B cell (primary cell): ENCODE measurements at regions of chr11 and their contacts with region 1.

Region 1: GRCh38 chr11:60363542-60364510 is 14.5 kb upstream of the MS4A7 start:
- DNase-seq: peak; percentile 92
- ATAC-seq: peak; percentile 81
- H3K4me3 ChIP-seq: peak overlapping the region; percentile 37 to 72 (median 52)
- H3K4me3 Mint-ChIP-seq: peak overlapping the region; percentile 80
- H3K27ac ChIP-seq: peak overlapping the region; percentile 82 to 92
- H3K27ac Mint-ChIP-seq: peak overlapping the region; percentile 90
- H3K4me1 ChIP-seq: peaks cover 60 to 62% of the 10 kb centered on the region in 2 donors
- H3K4me1 Mint-ChIP-seq: peaks cover 71% of the 10 kb centered on the region
- H3K27me3 ChIP-seq: no peaks in the 10 kb centered on the region
- H3K27me3 Mint-ChIP-seq: no peaks in the 10 kb centered on the region
- CTCF ChIP-seq: peak; percentile 88

Region 2: DNA sequence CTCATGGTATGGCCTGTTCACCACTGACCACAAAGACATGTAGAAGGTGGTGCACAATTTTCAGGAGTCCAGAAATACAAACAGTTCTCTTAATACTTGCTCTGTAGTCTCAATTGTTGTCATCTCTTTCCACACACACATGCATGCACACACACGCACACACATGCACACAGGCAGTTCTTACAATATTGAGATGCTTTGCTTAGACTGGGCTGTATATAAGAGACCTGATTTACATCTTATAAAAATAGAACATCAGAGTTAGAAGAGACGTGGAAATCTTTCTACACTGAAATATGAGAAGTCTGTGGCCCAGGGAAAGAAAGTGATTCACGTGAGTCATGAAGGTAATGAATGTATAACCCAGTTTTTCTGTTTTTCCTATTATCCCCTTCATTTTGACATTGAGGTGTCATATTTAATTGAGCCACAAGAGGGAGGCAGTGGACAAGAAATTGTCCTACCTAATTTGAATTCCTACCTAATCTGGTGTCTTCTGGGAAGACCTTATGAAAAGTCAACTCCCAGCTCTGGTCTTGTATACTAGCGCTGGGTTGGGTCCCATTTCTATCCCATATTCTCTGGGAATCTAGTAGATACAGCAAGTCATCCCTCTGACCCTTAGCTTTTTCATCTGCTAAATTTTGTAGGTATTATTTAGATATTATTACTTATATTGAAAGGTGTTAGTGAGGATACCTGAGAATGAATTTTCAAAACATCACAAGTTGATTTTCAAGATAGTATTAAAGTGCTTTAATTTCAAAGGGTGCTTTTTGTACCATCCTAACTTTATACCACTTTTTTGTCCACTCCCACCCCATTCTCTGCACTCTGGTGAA is 98.2 kb before region 1 on chr11:
- CTCF ChIA-PET with region 1: interaction called, 47 read pairs
- POLR2A ChIA-PET with region 1: no interaction called
- intact Hi-C with region 1: no loop called
- DNase-seq: peak; percentile 76
- ATAC-seq: peak; percentile 43
- H3K4me3 ChIP-seq: no peak overlapping the region
- H3K4me3 Mint-ChIP-seq: no peak overlapping the region
- H3K27ac ChIP-seq: no peak overlapping the region
- H3K27ac Mint-ChIP-seq: no peak overlapping the region
- H3K4me1 ChIP-seq: no peaks in the 10 kb centered on the region
- H3K4me1 Mint-ChIP-seq: peaks cover 4% of the 10 kb centered on the region
- H3K27me3 ChIP-seq: no peaks in the 10 kb centered on the region
- H3K27me3 Mint-ChIP-seq: no peaks in the 10 kb centered on the region
- CTCF ChIP-seq: peak; percentile 98

Region 3: DNA sequence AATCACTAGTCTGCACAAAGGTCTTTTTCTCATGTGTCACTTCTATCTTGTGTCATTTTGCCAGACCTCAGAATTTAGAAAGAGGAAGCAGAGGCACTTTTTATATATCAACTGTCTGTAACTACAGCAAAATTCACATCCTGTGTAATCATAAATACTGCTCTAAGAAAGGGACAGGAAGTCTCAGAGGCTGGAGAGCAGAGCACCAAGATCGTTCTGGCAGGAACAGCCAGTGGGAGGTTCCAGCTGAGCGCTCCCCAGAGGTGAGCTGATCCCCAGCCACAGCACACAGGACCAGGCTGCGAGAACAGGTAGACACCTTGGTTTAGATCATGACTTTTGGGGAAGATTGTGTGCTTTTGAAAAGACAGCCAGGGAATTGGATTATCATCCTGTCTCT is 14.5 kb after region 1 on chr11 and contains the start of gene MS4A7:
- CTCF ChIA-PET with region 1: interaction called, 23 read pairs
- POLR2A ChIA-PET with region 1: interaction called, 5 read pairs
- intact Hi-C with region 1: loop called (anchors 1 kb)
- DNase-seq: peak; percentile 87
- ATAC-seq: peak; percentile 81
- H3K4me3 ChIP-seq: peak within 1 kb of the TSS; percentile 12 to 58 (median 32)
- H3K4me3 Mint-ChIP-seq: peak within 1 kb of the TSS; percentile 85
- H3K27ac ChIP-seq: peak within 1 kb of the TSS; percentile 93 to 99
- H3K27ac Mint-ChIP-seq: peak within 1 kb of the TSS; percentile 95
- H3K4me1 ChIP-seq: peaks cover 67 to 73% of the 10 kb centered on the region in 2 donors
- H3K4me1 Mint-ChIP-seq: peaks cover 73% of the 10 kb centered on the region
- H3K27me3 ChIP-seq: no peaks in the 10 kb centered on the region
- H3K27me3 Mint-ChIP-seq: no peaks in the 10 kb centered on the region
- CTCF ChIP-seq: no peak
- total RNA-seq, gene MS4A7: 27.2 and 29.1 TPM in 2 replicates

Region 4: DNA sequence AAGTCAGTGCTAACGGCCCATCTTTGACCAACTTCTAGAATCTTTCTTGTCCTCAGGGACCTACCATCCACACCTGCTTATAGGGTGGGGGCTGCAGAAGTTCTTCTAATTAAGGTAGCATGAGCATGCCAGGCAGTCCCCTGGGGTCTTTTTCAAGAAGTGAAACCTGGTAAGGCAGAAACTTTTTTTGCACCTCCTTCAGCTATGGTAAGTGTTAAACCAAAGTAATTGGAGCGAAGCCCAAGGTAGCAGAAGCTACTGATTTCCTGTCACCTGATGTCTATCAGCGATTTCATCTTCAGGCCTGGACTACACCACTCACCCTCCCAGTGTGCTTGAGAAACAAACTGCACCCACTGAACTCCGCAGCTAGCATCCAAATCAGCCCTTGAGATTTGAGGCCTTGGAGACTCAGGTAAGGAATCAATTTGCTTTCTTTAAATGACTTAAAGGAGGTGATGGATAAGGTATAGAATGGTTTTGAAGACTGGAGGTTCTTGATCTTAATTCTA is 91.8 kb after region 1 on chr11 and contains the start of gene MS4A1:
- CTCF ChIA-PET with region 1: interaction called, 257 read pairs
- POLR2A ChIA-PET with region 1: interaction called, 22 read pairs
- intact Hi-C with region 1: loop called (anchors 1 kb)
- DNase-seq: peak; percentile 95
- ATAC-seq: peak; percentile 83
- H3K4me3 ChIP-seq: peak within 1 kb of the TSS; percentile 63 to 96 (median 74)
- H3K4me3 Mint-ChIP-seq: peak within 1 kb of the TSS; percentile 90
- H3K27ac ChIP-seq: peak within 1 kb of the TSS; percentile 93 to 98
- H3K27ac Mint-ChIP-seq: peak within 1 kb of the TSS; percentile 99
- H3K4me1 ChIP-seq: peaks cover 44% of the 10 kb centered on the region in 2 donors
- H3K4me1 Mint-ChIP-seq: peaks cover 65% of the 10 kb centered on the region
- H3K27me3 ChIP-seq: no peaks in the 10 kb centered on the region
- H3K27me3 Mint-ChIP-seq: no peaks in the 10 kb centered on the region
- CTCF ChIP-seq: no peak
- total RNA-seq, gene MS4A1: 1,202 and 1,215 TPM in 2 replicates

Region 5: GRCh38 chr11:60485986-60486385 is 122.2 kb after region 1 on chr11:
- CTCF ChIA-PET with region 1: interaction called, 162 read pairs
- POLR2A ChIA-PET with region 1: interaction called, 17 read pairs
- intact Hi-C with region 1: loop called (anchors 1 kb)
- DNase-seq: peak; percentile 88
- ATAC-seq: peak; percentile 93
- H3K4me3 ChIP-seq: no peak overlapping the region
- H3K4me3 Mint-ChIP-seq: no peak overlapping the region
- H3K27ac ChIP-seq: no peak overlapping the region
- H3K27ac Mint-ChIP-seq: peak overlapping the region; percentile 4
- H3K4me1 ChIP-seq: peaks cover 39 to 47% of the 10 kb centered on the region in 2 donors
- H3K4me1 Mint-ChIP-seq: peaks cover 54% of the 10 kb centered on the region
- H3K27me3 ChIP-seq: no peaks in the 10 kb centered on the region
- H3K27me3 Mint-ChIP-seq: no peaks in the 10 kb centered on the region
- CTCF ChIP-seq: peak; percentile 96

Region 6: GRCh38 chr11:60615497-60615896 is 251.7 kb after region 1 on chr11:
- CTCF ChIA-PET with region 1: interaction called, 89 read pairs
- POLR2A ChIA-PET with region 1: no interaction called
- intact Hi-C with region 1: loop called (anchors 1 kb)
- DNase-seq: no peak
- ATAC-seq: no peak
- H3K4me3 ChIP-seq: no peak overlapping the region
- H3K4me3 Mint-ChIP-seq: no peak overlapping the region
- H3K27ac ChIP-seq: no peak overlapping the region
- H3K27ac Mint-ChIP-seq: no peak overlapping the region
- H3K4me1 ChIP-seq: peaks cover 0 to 7% of the 10 kb centered on the region in 2 donors
- H3K4me1 Mint-ChIP-seq: peaks cover 7% of the 10 kb centered on the region
- H3K27me3 ChIP-seq: no peaks in the 10 kb centered on the region
- H3K27me3 Mint-ChIP-seq: peaks cover 8% of the 10 kb centered on the region
- CTCF ChIP-seq: no peak